Activated naive CD4-positive, alpha-beta T cell treated with anti-CD3 and anti-CD28 coated beads, Interleukin-2, amount 10 ng/mL, durations not matched to agents 7 days and 5 days (primary cell): ENCODE measurements at regions of chr5 and their contacts with region 1.

Region 1: GRCh38 chr5:177446200-177447065 is at the start of gene PRR7:
- DNase-seq: peak; percentile 77
- H3K4me3 Mint-ChIP-seq: peak within 1 kb of the TSS; percentile 64
- H3K27ac Mint-ChIP-seq: peak within 1 kb of the TSS; percentile 88
- H3K4me1 Mint-ChIP-seq: peaks cover 55% of the 10 kb centered on the region
- H3K27me3 Mint-ChIP-seq: peaks cover 41% of the 10 kb centered on the region

Region 2: GRCh38 chr5:177431317-177432142 is 14.9 kb before region 1 on chr5:
- CTCF ChIA-PET with region 1: interaction called, 89 read pairs
- DNase-seq: peak; percentile 86
- H3K4me3 Mint-ChIP-seq: peak overlapping the region; percentile 92
- H3K27ac Mint-ChIP-seq: peak overlapping the region; percentile 95
- H3K4me1 Mint-ChIP-seq: peaks cover 76% of the 10 kb centered on the region
- H3K27me3 Mint-ChIP-seq: no peaks in the 10 kb centered on the region

Region 3: DNA sequence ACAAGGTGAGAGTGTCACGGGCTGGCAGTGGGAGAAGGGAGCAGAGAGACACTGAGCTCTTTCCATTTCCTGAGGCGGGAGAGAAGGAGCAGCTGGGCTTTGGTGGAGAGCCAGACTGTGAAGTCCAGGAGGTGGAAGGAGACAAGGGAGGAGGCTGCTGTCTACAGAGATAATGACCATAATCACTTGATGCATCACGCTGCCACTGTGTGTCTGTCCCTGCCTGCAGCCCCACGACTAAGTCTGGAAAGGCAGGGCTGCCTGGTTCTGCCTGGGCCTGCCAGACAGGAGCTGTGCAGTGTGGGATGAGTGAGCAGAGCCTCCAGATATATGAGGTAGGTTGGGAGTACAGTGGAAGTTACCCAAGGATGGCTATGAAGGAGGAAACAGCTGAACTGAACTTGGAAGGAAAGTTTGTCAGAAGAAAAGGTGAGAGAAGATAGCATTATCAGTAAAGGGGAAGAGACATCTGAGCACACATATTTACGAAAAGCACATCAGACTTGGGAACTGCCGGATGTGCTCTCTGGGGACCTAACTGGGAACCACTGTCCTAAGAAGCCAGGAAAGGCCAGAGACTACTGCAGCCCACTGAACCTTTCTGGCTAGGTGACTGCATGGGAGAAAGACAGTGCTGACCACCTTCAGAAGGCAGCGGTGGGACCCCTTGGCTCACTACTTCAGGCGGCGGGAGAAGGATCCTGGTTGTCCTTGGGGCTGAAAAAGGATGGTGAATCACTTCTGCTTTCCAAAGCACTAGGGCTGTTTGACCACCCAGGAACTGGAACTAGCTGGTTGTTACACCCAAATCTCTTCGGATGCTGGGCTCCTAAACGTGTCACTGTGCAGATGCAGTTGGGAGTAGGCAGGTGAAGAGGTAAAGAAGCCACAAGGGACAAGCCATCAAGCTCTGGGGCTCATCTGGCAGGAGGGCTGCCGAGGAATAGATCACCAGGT is 83.1 kb after region 1 on chr5:
- CTCF ChIA-PET with region 1: no interaction called
- DNase-seq: no peak
- H3K4me3 Mint-ChIP-seq: no peak overlapping the region
- H3K27ac Mint-ChIP-seq: peak overlapping the region; percentile 12
- H3K4me1 Mint-ChIP-seq: no peaks in the 10 kb centered on the region
- H3K27me3 Mint-ChIP-seq: no peaks in the 10 kb centered on the region